Activated CD8-positive, alpha-beta T cell treated with anti-CD3 and anti-CD28 coated beads, Interleukin-2, amount 10 ng/mL, durations not matched to agents 7 days and 5 days (primary cell): ENCODE measurements at regions of chr12 and their contacts with region 1.

Region 1: GRCh38 chr12:121811434-121812319 is 7.9 kb downstream of the SETD1B start:
- DNase-seq: peak; percentile 71
- ATAC-seq: peak; percentile 83
- H3K4me3 Mint-ChIP-seq: peak overlapping the region; percentile 65
- H3K27ac Mint-ChIP-seq: peak overlapping the region; percentile 62
- H3K4me1 Mint-ChIP-seq: peaks cover 52% of the 10 kb centered on the region
- H3K27me3 Mint-ChIP-seq: no peaks in the 10 kb centered on the region

Region 2: GRCh38 chr12:121637231-121637914 is 174.3 kb before region 1 on chr12:
- CTCF ChIA-PET with region 1: no interaction called
- POLR2A ChIA-PET with region 1: no interaction called
- DNase-seq: peak; percentile 81
- ATAC-seq: peak; percentile 74
- H3K4me3 Mint-ChIP-seq: peak overlapping the region; percentile 52
- H3K27ac Mint-ChIP-seq: peak overlapping the region; percentile 88
- H3K4me1 Mint-ChIP-seq: peaks cover 73% of the 10 kb centered on the region
- H3K27me3 Mint-ChIP-seq: no peaks in the 10 kb centered on the region

Region 3: GRCh38 chr12:121762269-121762668 is 49.4 kb before region 1 on chr12:
- CTCF ChIA-PET with region 1: no interaction called
- POLR2A ChIA-PET with region 1: no interaction called
- DNase-seq: no peak
- ATAC-seq: no peak
- H3K4me3 Mint-ChIP-seq: no peak overlapping the region
- H3K27ac Mint-ChIP-seq: no peak overlapping the region
- H3K4me1 Mint-ChIP-seq: peaks cover 2% of the 10 kb centered on the region
- H3K27me3 Mint-ChIP-seq: no peaks in the 10 kb centered on the region

Region 4: DNA sequence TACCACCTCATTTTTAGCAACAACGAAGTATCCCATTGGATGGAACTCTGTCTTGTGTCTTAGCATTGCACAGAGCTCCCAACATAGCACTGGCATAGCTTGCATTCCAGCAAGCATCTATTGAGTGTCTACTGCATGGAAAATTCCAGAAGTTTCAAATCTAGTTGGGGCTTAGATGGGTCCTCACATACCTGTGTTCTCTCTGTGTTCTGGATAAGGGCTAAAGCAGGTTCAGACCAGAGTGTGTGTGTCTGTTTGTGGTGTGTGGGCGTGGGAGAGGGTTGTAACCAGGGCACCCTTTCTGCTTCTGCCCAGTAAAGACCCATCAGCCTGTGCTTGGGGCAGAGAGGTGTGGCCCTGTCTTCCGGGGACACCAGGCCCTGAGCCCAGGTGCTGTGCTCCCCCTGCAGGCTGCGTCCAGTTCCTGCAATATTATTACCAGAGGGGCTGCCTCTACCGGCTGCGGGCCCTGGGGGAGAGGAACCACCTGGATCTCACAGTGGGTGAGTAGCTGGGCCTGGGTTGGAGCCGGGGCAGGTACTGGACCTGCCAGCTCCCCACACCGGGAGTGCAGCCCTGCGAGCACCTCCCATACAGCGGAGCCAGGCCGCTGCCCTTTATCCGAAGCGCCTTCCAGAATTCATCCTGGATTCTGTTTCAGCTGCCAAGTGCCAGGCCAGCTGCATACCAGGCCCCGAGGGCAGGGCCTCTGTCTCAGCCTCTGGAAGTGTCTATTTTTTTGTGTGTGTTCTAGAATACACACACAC is 38.5 kb before region 1 on chr12:
- CTCF ChIA-PET with region 1: interaction called, 14 read pairs
- POLR2A ChIA-PET with region 1: interaction called, 543 read pairs
- DNase-seq: peak; percentile 90
- ATAC-seq: peak; percentile 87
- H3K4me3 Mint-ChIP-seq: no peak overlapping the region
- H3K27ac Mint-ChIP-seq: peak overlapping the region; percentile 69
- H3K4me1 Mint-ChIP-seq: peaks cover 23% of the 10 kb centered on the region
- H3K27me3 Mint-ChIP-seq: no peaks in the 10 kb centered on the region

Region 5: GRCh38 chr12:121839106-121839992 is 27.7 kb after region 1 on chr12:
- CTCF ChIA-PET with region 1: interaction called, 14 read pairs
- POLR2A ChIA-PET with region 1: interaction called, 3 read pairs
- DNase-seq: peak; percentile 99
- ATAC-seq: peak; percentile 99
- H3K4me3 Mint-ChIP-seq: peak overlapping the region; percentile 99
- H3K27ac Mint-ChIP-seq: peak overlapping the region; percentile 96
- H3K4me1 Mint-ChIP-seq: peaks cover 22% of the 10 kb centered on the region
- H3K27me3 Mint-ChIP-seq: no peaks in the 10 kb centered on the region

Region 6: GRCh38 chr12:121888478-121889266 is 77.0 kb after region 1 on chr12 and contains the start of gene PSMD9:
- CTCF ChIA-PET with region 1: interaction called, 24 read pairs
- POLR2A ChIA-PET with region 1: interaction called, 7 read pairs
- DNase-seq: peak; percentile 98
- ATAC-seq: peak; percentile 93
- H3K4me3 Mint-ChIP-seq: peak within 1 kb of the TSS; percentile 99
- H3K27ac Mint-ChIP-seq: peak within 1 kb of the TSS; percentile 100
- H3K4me1 Mint-ChIP-seq: peaks cover 44% of the 10 kb centered on the region
- H3K27me3 Mint-ChIP-seq: no peaks in the 10 kb centered on the region
- total RNA-seq, gene PSMD9: 62.3 to 70.6 TPM

Region 7: DNA sequence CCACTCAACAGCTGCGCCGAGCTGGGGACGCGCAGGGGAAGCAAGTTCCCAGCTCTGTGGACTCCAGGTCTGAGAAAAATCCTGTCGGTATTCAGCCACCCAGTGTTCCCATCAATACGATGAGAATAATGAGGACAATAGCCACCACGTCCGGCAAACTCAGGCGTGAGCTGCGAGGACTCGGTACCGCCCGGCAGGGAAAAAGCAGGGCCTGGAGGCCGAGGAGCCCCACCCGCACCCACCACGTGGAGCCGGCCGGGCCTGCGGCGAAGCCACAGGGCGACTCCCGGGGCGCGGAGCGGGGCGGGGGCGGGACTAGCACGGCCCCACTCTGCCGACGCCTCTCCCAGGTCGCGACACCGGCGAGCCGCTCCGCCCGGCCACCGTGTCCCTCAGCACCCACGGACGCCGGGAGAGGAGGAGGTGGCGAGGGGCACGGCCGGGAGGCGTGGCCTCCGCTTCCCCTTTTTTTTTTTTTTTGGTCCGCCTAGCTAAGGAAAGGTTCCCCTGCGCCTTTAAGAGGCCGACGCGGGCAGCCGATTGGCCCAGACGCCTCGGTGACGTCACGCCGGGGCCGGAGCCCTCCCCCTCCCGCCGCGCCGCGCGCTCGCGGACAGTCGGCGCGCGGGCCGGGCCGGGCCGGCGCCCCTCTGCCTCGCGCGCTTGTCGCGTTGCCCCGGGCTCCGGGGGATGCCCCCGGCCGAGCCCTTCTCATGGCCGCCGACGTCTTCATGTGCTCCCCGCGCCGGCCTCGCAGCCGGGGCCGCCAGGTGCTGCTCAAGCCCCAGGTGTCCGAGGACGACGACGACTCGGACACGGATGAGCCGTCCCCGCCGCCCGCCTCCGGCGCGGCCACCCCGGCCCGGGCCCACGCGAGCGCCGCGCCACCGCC is 266.7 kb after region 1 on chr12 and contains the start of gene MLXIP:
- CTCF ChIA-PET with region 1: no interaction called
- POLR2A ChIA-PET with region 1: no interaction called
- DNase-seq: peak; percentile 93
- ATAC-seq: peak; percentile 81
- H3K4me3 Mint-ChIP-seq: peak within 1 kb of the TSS; percentile 86
- H3K27ac Mint-ChIP-seq: peak within 1 kb of the TSS; percentile 83
- H3K4me1 Mint-ChIP-seq: peaks cover 47% of the 10 kb centered on the region
- H3K27me3 Mint-ChIP-seq: peaks cover 5% of the 10 kb centered on the region
- total RNA-seq, gene MLXIP: 38.8 to 42.7 TPM